Dendritic cell treated with granulocyte-macrophage colony-stimulating factor and Interleukin-4, amounts not matched to agents 40 ng/mL and 50 ng/mL, for 4 days (primary cell): ENCODE measurements at regions of chr20 and their contacts with region 1.

Region 1: GRCh38 chr20:33731693-33732165 is at the start of gene ZNF341:
- H3K4me3 Mint-ChIP-seq: peak within 1 kb of the TSS; percentile 89
- H3K27ac Mint-ChIP-seq: peak within 1 kb of the TSS; percentile 90
- H3K4me1 Mint-ChIP-seq: peaks cover 47% of the 10 kb centered on the region
- H3K27me3 Mint-ChIP-seq: no peaks in the 10 kb centered on the region

Region 2: GRCh38 chr20:33686100-33686983 is 45.4 kb before region 1 on chr20 and contains the start of gene E2F1:
- intact Hi-C with region 1: loop called (anchors 5 kb)
- H3K4me3 Mint-ChIP-seq: peak within 1 kb of the TSS; percentile 75
- H3K27ac Mint-ChIP-seq: peak within 1 kb of the TSS; percentile 79
- H3K4me1 Mint-ChIP-seq: peaks cover 31% of the 10 kb centered on the region
- H3K27me3 Mint-ChIP-seq: no peaks in the 10 kb centered on the region

Region 3: GRCh38 chr20:33719989-33720709 is 11.6 kb before region 1 on chr20 and contains the start of gene PXMP4:
- intact Hi-C with region 1: loop called (anchors 1 kb)
- H3K4me3 Mint-ChIP-seq: peak within 1 kb of the TSS; percentile 88
- H3K27ac Mint-ChIP-seq: peak within 1 kb of the TSS; percentile 75
- H3K4me1 Mint-ChIP-seq: peaks cover 26% of the 10 kb centered on the region
- H3K27me3 Mint-ChIP-seq: no peaks in the 10 kb centered on the region

Region 4: GRCh38 chr20:33810885-33811777 is 79.4 kb after region 1 on chr20 and contains the start of gene CHMP4B:
- intact Hi-C with region 1: loop called (anchors 5 kb)
- H3K4me3 Mint-ChIP-seq: peak within 1 kb of the TSS; percentile 97
- H3K27ac Mint-ChIP-seq: peak within 1 kb of the TSS; percentile 99
- H3K4me1 Mint-ChIP-seq: peaks cover 51% of the 10 kb centered on the region
- H3K27me3 Mint-ChIP-seq: no peaks in the 10 kb centered on the region